Heart left ventricle (tissue), 16 donors: ENCODE measurements at regions of chr9 and their contacts with region 1.

Region 1: DNA sequence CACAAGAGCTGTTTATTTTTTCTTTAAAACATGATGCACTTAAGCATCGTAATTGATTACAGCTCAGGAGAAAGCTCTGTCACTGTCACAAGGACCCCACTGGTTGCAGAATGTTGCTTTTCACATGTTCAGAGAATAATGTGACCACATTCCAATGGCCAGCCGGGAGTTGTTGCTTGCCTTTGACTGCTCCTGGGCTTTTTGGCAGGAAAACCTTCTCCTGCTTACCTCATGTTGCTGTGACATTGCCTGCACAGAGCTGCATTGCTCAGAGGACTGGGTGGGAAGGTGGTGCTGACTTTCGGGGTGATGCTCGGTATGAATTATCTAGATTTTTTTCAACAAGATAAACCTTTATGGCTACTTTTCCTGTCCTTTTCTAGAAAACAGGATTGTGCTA is 88.2 kb downstream of the PALM2AKAP2 start:
- DNase-seq: no peak
- ATAC-seq: peak; percentile 41 to 63 (median 48)
- H3K4me3 ChIP-seq: peak overlapping the region in 8 of 12 donors; percentile 20 to 45 (median 36)
- H3K27ac ChIP-seq: peak overlapping the region; percentile 66 to 94 (median 84)
- H3K4me1 ChIP-seq: peaks cover 0 to 50% (median 14%) of the 10 kb centered on the region in 12 donors
- H3K27me3 ChIP-seq: no peaks in the 10 kb centered on the region
- CTCF ChIP-seq: no peak
- POLR2A ChIP-seq: no peak

Region 2: GRCh38 chr9:109856785-109857184 is 11.4 kb before region 1 on chr9:
- intact Hi-C with region 1: loop called in 1 of 10 experiments (anchors 2 kb)
- DNase-seq: peak; percentile 84 to 95 (median 86)
- ATAC-seq: peak; percentile 99 to 100 (median 100)
- H3K4me3 ChIP-seq: no peak overlapping the region
- H3K27ac ChIP-seq: peak overlapping the region; percentile 56 to 96 (median 88)
- H3K4me1 ChIP-seq: peaks cover 0 to 69% (median 40%) of the 10 kb centered on the region in 12 donors
- H3K27me3 ChIP-seq: no peaks in the 10 kb centered on the region
- CTCF ChIP-seq: no peak
- POLR2A ChIP-seq: no peak

Region 3: DNA sequence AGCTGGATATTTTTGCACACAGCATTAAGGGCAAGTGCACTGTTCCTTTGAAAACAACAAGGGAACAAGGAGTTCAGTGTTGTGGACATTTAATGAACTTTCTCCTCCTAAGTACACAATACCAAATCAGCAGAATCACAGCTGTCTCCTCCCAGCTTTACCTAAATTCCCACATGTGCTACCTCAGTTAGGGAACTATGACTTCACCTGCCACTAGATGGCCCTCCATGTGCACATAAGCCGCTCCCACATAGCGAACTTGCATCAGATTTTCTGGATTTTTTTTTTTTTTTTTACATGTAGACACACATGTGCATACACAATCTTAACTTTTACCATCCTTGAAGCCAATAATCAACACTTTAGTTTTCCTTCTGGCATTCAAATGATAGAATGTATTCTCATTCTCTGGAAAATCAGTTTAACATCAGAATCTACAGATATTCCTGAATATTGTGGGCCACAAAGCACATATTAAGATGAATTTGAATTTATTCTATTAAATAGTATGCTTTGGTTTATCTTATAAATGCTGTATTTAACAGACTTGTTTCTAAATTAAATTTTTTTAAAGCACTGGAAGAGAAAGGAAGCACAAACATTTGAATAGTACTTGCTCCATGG is 35.4 kb after region 1 on chr9:
- intact Hi-C with region 1: no loop called
- DNase-seq: peak in 4 of 5 donors; percentile 47 to 64 (median 60)
- ATAC-seq: peak; percentile 24 to 66 (median 42)
- H3K4me3 ChIP-seq: no peak overlapping the region
- H3K27ac ChIP-seq: peak overlapping the region in 1 of 12 donors; percentile 3
- H3K4me1 ChIP-seq: peaks cover 9 to 68% (median 29%) of the 10 kb centered on the region in 12 donors
- H3K27me3 ChIP-seq: no peaks in the 10 kb centered on the region
- CTCF ChIP-seq: peak; percentile 63 to 90 (median 82)
- POLR2A ChIP-seq: no peak

Region 4: GRCh38 chr9:109918339-109919163 is 50.3 kb after region 1 on chr9:
- intact Hi-C with region 1: no loop called
- DNase-seq: no peak
- ATAC-seq: peak in 3 of 4 donors; percentile 43 to 53 (median 52)
- H3K4me3 ChIP-seq: peak overlapping the region in 1 of 12 donors; percentile 12
- H3K27ac ChIP-seq: peak overlapping the region in 9 of 12 donors; percentile 0 to 56 (median 22)
- H3K4me1 ChIP-seq: peaks cover 0 to 61% (median 35%) of the 10 kb centered on the region in 12 donors
- H3K27me3 ChIP-seq: no peaks in the 10 kb centered on the region
- CTCF ChIP-seq: no peak
- POLR2A ChIP-seq: no peak